Panc1 (cell line): ENCODE measurements at regions of chr3 and their contacts with region 1.

Region 1: GRCh38 chr3:188185717-188186251 is 31.8 kb downstream of the LPP start:
- DNase-seq: no peak
- ATAC-seq: peak; percentile 40; the same call in 1 of the 2 replicates
- H3K4me3 ChIP-seq: no peak overlapping the region
- H3K27ac ChIP-seq: no peak overlapping the region; the same call in 1 of the 2 replicates
- H3K4me1 ChIP-seq: no peaks in the 10 kb centered on the region; the same call in 1 of the 2 replicates
- H3K27me3 ChIP-seq: no peaks in the 10 kb centered on the region
- CTCF ChIP-seq: no peak

Region 2: DNA sequence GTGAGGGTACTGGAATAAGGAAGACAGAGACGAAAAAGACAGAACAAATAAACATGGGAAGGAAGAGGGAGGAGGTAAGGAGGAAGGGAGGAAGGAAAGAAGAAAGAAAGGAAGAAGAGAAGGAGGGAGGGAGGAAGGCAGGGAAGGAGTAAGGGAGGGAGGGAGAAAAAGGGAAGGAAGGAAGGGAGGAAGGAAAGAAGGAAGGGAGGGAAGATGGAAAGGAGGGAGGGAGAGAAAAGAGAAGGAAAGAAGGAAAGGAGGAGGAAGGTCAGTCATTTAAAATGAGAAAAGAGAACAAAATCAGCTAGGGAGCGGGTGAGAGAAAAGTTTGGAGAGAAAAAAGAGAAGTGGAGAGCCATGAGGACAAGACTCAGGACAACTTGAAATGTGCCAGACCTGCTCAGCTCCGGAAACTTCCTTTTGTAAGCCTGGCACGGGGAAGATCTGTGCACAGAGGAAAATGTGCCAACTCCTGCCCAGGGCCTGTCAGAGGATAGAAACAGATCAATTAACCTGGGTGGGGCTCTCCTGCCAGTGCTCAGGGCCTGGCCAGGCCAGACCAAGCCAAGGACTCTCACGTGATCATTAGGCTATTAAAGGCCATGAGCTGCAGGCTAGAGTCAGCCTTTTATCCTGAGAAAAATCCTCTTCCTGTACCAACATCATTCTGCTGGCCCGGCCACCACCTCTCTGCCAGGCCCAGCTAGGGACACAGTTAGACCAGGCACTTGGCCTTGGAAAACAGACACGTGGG is 390.4 kb before region 1 on chr3:
- CTCF ChIA-PET with region 1: no interaction called
- POLR2A ChIA-PET with region 1: no interaction called
- in situ Hi-C with region 1: no loop called
- intact Hi-C with region 1: no loop called
- DNase-seq: no peak
- ATAC-seq: no peak
- H3K4me3 ChIP-seq: no peak overlapping the region
- H3K27ac ChIP-seq: no peak overlapping the region
- H3K4me1 ChIP-seq: no peaks in the 10 kb centered on the region; the same call in 1 of the 2 replicates
- H3K27me3 ChIP-seq: peaks cover 3% of the 10 kb centered on the region; the same call in 1 of the 2 replicates
- CTCF ChIP-seq: no peak

Region 3: GRCh38 chr3:187832202-187832601 is 353.6 kb before region 1 on chr3:
- CTCF ChIA-PET with region 1: no interaction called
- POLR2A ChIA-PET with region 1: interaction called, 12 read pairs
- in situ Hi-C with region 1: no loop called
- intact Hi-C with region 1: no loop called
- DNase-seq: no peak
- ATAC-seq: no peak
- H3K4me3 ChIP-seq: no peak overlapping the region
- H3K27ac ChIP-seq: no peak overlapping the region
- H3K4me1 ChIP-seq: no peaks in the 10 kb centered on the region
- H3K27me3 ChIP-seq: no peaks in the 10 kb centered on the region
- CTCF ChIP-seq: peak; percentile 28; the same call in 1 of the 2 replicates

Region 4: GRCh38 chr3:188170461-188171459 is 15.0 kb before region 1 on chr3:
- CTCF ChIA-PET with region 1: no interaction called
- POLR2A ChIA-PET with region 1: interaction called, 12 read pairs
- in situ Hi-C with region 1: no loop called
- intact Hi-C with region 1: no loop called
- DNase-seq: no peak
- ATAC-seq: no peak
- H3K4me3 ChIP-seq: no peak overlapping the region
- H3K27ac ChIP-seq: no peak overlapping the region
- H3K4me1 ChIP-seq: peaks cover 9% of the 10 kb centered on the region; the same call in 1 of the 2 replicates
- H3K27me3 ChIP-seq: no peaks in the 10 kb centered on the region
- CTCF ChIP-seq: no peak

Region 5: GRCh38 chr3:188309437-188310269 is 123.9 kb after region 1 on chr3:
- CTCF ChIA-PET with region 1: no interaction called
- POLR2A ChIA-PET with region 1: no interaction called
- in situ Hi-C with region 1: no loop called
- intact Hi-C with region 1: no loop called
- DNase-seq: no peak
- ATAC-seq: no peak
- H3K4me3 ChIP-seq: no peak overlapping the region
- H3K27ac ChIP-seq: no peak overlapping the region
- H3K4me1 ChIP-seq: no peaks in the 10 kb centered on the region
- H3K27me3 ChIP-seq: no peaks in the 10 kb centered on the region
- CTCF ChIP-seq: no peak